ENCODE measurements at regions of chr3 and their contacts with region 1.

Region 1: DNA sequence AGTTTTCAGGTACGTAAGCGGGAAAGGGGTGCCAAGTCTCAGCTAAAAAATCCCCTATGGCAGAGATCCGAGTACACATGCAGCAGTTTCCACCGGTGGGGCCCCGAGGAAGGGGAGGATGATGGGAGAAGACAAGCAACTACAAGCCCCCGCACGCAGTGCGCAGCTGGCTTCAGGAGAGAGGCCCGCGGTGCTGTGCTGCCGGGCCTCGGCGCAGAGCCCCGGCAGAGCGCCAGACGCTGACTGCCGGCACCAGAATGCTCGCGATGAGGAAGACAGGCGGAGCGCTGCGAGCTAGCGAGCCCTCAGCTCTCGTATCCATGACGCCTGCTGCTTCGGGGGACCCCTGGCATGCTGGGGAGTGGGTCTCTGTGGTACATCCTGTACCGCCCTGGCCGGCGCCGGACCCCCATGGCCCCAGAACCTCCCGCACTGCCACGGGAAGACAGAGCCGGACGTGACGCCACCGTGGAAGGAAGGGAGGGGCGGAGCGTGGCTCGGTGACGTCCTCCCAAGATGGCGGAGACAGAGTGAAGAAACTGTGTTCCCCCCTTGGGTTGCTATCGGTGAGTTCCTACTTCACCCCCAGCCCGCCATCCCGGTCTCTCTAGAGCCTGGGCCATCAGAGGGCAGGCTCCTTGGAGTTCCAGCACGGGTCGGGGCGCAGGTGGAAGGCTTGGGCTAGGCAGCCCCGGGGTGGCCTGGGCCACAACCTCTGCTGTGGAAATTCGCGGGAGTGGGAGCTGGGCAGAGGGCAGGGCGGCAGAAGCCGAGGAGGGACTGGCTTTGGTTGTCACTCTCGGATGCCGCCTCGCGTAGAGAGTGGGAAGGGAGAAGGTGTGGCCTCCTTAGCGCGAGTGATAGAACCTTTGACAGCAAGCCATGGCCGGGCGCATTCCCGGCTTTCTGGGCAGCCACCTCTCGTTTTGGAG is at the start of gene MYNN:
- DNase-seq: peak; percentile 81
- ATAC-seq: peak; percentile 88
- H3K4me3 ChIP-seq: peak within 1 kb of the TSS; percentile 89 to 99 (median 98)
- H3K27ac ChIP-seq: peak within 1 kb of the TSS; percentile 94
- H3K4me1 ChIP-seq: peaks cover 20% of the 10 kb centered on the region
- H3K27me3 ChIP-seq: peaks cover 0 to 3% of the 10 kb centered on the region in 2 experiments; a peak in 1 of 5 replicates
- CTCF ChIP-seq: no peak; the same call in 1 of the 2 replicates
- EP300 ChIP-seq: no peak
- POLR2A ChIP-seq: peak; percentile 89 to 97
- RAD21 ChIP-seq: peak; percentile 32; the same call in 1 of the 2 replicates
- total RNA-seq, gene MYNN: 17.6 and 23.7 TPM in 2 replicates

Region 2: DNA sequence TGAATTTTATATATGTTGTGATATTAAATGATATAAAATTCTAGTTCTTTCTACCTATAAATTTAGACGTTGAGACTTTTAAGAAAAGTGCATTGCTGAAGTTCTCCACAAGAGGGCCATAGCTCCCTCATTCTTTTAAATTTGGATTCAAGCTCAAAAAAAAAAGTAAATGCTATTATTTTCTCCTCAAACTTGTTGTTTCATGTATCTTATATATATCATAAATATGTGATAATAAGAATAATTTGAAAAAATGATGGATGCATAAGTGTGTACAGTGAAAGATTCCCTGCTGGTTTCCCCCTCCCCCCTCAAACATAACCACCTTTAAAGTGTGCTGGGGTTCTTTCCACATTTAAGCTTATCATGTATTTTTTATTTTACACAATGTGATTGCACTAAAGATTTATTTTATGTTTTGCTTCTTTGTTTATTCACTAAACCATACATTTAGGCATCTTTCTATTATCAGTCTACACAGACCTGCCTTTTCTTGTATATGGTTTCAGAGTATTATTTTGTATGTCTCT is 908.1 kb before region 1 on chr3:
- CTCF ChIA-PET with region 1: no interaction called
- POLR2A ChIA-PET with region 1: interaction called, 3 read pairs
- in situ Hi-C with region 1: no loop called
- intact Hi-C with region 1: loop called (anchors 5 kb)
- DNase-seq: no peak
- ATAC-seq: no peak
- H3K4me3 ChIP-seq: no peak overlapping the region
- H3K27ac ChIP-seq: no peak overlapping the region
- H3K4me1 ChIP-seq: peaks cover 87% of the 10 kb centered on the region
- H3K27me3 ChIP-seq: no peaks in the 10 kb centered on the region
- CTCF ChIP-seq: peak; percentile 48; the same call in 1 of the 2 replicates
- EP300 ChIP-seq: no peak
- POLR2A ChIP-seq: no peak
- RAD21 ChIP-seq: no peak

Region 3: GRCh38 chr3:170078620-170079281 is 305.6 kb after region 1 on chr3:
- CTCF ChIA-PET with region 1: no interaction called
- POLR2A ChIA-PET with region 1: interaction called, 3 read pairs
- in situ Hi-C with region 1: no loop called
- intact Hi-C with region 1: loop called (anchors 2 kb)
- DNase-seq: peak; percentile 83
- ATAC-seq: peak; percentile 74
- H3K4me3 ChIP-seq: peak overlapping the region; percentile 30 to 51 (median 39)
- H3K27ac ChIP-seq: peak overlapping the region; percentile 85
- H3K4me1 ChIP-seq: peaks cover 64% of the 10 kb centered on the region
- H3K27me3 ChIP-seq: no peaks in the 10 kb centered on the region
- CTCF ChIP-seq: peak; percentile 63
- EP300 ChIP-seq: no peak
- POLR2A ChIP-seq: no peak
- RAD21 ChIP-seq: peak; percentile 28; the same call in 1 of the 2 replicates

Region 4: GRCh38 chr3:170128977-170129431 is 355.8 kb after region 1 on chr3:
- CTCF ChIA-PET with region 1: no interaction called
- POLR2A ChIA-PET with region 1: no interaction called
- in situ Hi-C with region 1: no loop called
- intact Hi-C with region 1: no loop called
- DNase-seq: no peak
- ATAC-seq: peak; percentile 38; the same call in 2 of the 3 replicates
- H3K4me3 ChIP-seq: no peak overlapping the region
- H3K27ac ChIP-seq: no peak overlapping the region
- H3K4me1 ChIP-seq: no peaks in the 10 kb centered on the region
- H3K27me3 ChIP-seq: no peaks in the 10 kb centered on the region
- CTCF ChIP-seq: no peak
- EP300 ChIP-seq: no peak
- POLR2A ChIP-seq: no peak
- RAD21 ChIP-seq: no peak